ENCODE measurements at regions of chr7 and their contacts with region 1.

Region 1: GRCh38 chr7:130926001-130926691 is 192.1 kb upstream of the KLF14 start:
- DNase-seq: peak; percentile 32
- H3K4me3 ChIP-seq: no peak overlapping the region
- H3K27ac ChIP-seq: peak overlapping the region; percentile 94
- H3K4me1 ChIP-seq: peaks cover 90% of the 10 kb centered on the region
- H3K27me3 ChIP-seq: no peaks in the 10 kb centered on the region
- CTCF ChIP-seq: no peak

Region 2: GRCh38 chr7:130974794-130975193 is 48.6 kb after region 1 on chr7:
- CTCF ChIA-PET with region 1: no interaction called
- POLR2A ChIA-PET with region 1: interaction called, 4 read pairs
- intact Hi-C with region 1: loop called (anchors 2 kb)
- DNase-seq: no peak
- H3K4me3 ChIP-seq: no peak overlapping the region
- H3K27ac ChIP-seq: no peak overlapping the region
- H3K4me1 ChIP-seq: peaks cover 25% of the 10 kb centered on the region
- H3K27me3 ChIP-seq: no peaks in the 10 kb centered on the region
- CTCF ChIP-seq: no peak

Measured in A673 (cell line).